GM12878 (cell line): ENCODE measurements at regions of chr14 and their contacts with region 1.

Region 1: DNA sequence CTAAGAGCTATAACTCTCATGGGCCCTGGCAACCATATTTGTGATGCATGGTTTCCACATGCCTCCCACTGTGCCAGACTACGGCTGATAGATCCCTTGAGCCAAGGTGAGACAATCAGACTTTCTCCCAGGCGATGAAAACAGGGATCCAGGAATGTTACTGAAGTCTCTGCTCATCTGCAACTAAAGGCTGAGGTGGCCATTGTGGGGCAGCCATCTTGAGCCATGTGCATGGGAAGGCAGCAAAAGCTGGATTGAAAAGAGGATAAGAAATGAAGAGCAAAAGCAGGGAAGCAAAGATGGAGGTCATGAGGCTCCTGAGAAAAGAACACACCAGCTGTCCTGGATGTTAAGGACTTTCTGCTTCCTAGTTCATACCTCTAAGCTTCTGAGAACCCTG is 5.5 kb downstream of the EGLN3 start:
- DNase-seq: no peak
- ATAC-seq: no peak
- H3K4me3 ChIP-seq: no peak overlapping the region
- H3K27ac ChIP-seq: no peak overlapping the region
- H3K4me1 ChIP-seq: no peaks in the 10 kb centered on the region
- H3K27me3 ChIP-seq: peaks cover 0 to 3% of the 10 kb centered on the region in 2 experiments; a peak in 2 of 4 replicates
- CTCF ChIP-seq: no peak
- EP300 ChIP-seq: no peak
- POLR2A ChIP-seq: no peak
- RAD21 ChIP-seq: no peak

Region 2: DNA sequence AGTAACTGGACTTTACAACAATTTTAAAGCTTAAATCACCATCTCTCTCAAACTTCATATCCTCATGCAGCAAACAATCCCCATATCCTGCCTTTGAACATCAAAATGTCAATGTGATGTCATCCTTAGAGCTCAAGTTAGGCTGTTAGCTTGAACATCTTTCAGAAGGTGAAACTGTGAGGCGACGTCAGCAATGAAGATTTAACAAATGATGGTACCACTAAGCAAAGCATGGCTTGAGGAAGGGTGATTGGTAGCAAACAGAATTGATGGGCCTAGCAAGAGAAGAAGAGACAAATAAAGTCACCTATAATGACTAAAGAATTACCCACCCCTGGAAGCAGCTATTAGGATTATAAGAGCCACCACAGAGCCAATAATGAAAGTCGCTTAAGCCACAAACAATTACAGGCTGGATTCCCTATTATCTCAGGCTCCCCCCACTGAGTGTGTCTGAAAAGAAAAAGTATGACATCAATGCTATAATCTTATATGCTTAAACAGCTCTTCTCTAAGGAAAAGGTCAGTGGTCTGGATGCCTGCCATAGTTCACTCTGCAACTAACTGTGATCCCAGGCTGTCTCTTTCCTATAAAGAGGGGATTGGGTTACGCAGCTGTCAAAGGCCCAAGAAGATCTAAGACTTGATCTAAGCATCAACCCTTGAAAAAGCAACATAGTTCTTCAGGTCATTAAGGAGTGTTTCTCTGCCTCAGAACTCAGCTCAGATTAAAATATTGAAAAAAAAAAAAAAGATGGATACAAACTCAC is 12.6 kb before region 1 on chr14:
- CTCF ChIA-PET with region 1: interaction called, 45 read pairs
- POLR2A ChIA-PET with region 1: interaction called, 13 read pairs
- RAD21 ChIA-PET with region 1: interaction called, 13 read pairs
- SMC1A ChIA-PET with region 1: interaction called, 47 read pairs
- in situ Hi-C with region 1: no loop called
- intact Hi-C with region 1: no loop called
- DNase-seq: no peak
- ATAC-seq: no peak
- H3K4me3 ChIP-seq: no peak overlapping the region
- H3K27ac ChIP-seq: no peak overlapping the region
- H3K4me1 ChIP-seq: no peaks in the 10 kb centered on the region
- H3K27me3 ChIP-seq: no peaks in the 10 kb centered on the region
- CTCF ChIP-seq: no peak
- EP300 ChIP-seq: no peak
- POLR2A ChIP-seq: no peak
- RAD21 ChIP-seq: no peak